ENCODE measurements at regions of chr2 and their contacts with region 1.

Region 1: DNA sequence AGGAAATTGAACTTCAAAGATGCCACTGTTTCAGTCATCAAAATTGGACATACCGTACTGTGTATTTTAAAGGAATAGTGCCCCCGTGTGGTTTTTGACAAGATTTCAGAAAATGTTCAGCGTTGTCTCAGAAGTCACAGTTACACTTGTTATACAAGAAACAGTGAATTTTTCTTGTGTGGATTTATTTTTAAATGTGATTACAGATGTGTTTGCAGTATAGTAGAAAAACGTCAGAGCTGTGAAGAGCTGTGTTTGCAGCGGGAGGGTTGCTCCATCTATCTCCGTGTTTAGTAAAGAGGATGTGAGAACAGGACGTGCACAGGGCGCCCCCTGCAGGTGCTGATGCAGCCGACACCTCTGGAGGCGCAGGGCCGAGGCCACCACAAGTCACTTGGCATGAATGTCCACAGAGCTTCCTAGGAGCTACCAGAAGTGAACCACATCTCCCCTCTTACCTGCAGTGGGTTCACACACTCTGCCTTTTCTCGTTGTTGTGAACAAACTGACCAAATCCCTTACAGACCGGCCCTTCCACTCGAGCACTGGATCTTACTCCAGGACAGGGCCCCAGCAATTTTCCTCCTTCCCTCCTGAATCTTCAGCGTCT is 73.1 kb downstream of the CACNB4 start:
- DNase-seq: peak; percentile 56
- CTCF ChIP-seq: peak; percentile 97

Region 2: GRCh38 chr2:151619337-151619989 is 406.3 kb before region 1 on chr2:
- in situ Hi-C with region 1: loop called (anchors 10 kb)
- DNase-seq: no peak
- CTCF ChIP-seq: no peak

Region 3: GRCh38 chr2:151900331-151900730 is 125.5 kb before region 1 on chr2:
- in situ Hi-C with region 1: no loop called
- DNase-seq: no peak
- CTCF ChIP-seq: no peak

Region 4: DNA sequence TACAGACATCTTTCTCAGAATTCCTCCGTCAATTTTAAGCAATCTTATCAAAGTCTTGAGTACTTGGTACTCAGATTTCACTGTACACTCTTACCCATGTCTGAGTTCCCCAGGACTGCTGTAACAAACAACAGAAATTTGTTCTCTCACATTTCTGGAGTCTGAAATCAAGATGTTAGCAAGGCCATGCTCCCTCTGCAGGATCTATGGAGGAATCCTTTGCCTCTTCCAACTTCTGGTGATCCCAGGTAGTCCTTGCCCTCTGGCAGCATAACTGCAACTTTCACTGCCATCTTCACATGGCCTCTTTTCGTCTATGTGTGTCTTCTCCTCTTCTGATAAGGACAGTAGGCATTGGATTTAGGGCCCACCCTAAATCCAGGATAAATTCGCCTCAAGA is 90.2 kb after region 1 on chr2:
- in situ Hi-C with region 1: no loop called
- DNase-seq: no peak
- CTCF ChIP-seq: no peak

Region 5: GRCh38 chr2:152466980-152467676 is 441.3 kb after region 1 on chr2:
- in situ Hi-C with region 1: loop called (anchors 25 kb)
- DNase-seq: peak; percentile 56
- CTCF ChIP-seq: no peak